ENCODE measurements at regions of chr11 and their contacts with region 1.

Region 1: DNA sequence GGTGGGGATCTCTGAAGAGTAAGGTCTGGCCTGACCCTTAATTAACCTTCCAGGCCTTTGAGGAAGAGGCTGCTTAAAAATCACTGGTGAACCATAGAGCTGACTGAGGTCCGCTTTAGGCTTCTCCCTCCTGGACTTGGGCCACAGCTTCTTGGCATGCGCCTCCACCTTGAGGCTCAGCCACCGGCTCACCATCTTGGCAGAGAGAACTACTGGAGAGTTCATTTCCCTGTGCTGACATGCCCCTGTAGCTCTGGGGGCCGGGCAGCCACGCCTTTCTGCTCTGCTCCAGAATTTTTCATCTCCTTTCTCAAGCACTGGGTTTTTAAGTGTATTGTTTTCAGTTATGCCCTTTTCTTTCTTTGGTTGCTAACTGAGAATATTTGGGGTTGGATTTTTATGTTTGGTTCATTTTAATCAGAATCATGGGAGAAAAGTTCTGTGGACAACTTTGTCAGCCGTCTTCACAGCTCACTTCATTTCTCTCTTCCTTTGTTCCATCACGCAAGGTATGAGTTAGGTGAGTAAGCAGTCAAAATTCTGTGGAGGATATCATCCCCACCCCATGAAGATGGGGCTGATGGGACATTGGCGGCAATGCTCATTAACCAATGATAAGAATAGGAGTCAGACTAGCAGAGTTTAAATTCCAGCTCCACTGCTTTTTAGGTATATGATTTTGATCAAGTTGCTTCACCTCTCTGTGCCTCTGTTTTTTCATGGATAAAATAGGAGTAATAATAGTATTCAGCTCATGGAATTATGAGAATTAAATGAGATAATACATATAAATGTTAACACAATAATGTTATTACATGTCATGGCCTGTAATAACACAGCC is 103.9 kb downstream of the DBX1 start:
- DNase-seq: no peak
- H3K4me3 ChIP-seq: no peak overlapping the region
- H3K27ac ChIP-seq: no peak overlapping the region
- H3K4me1 ChIP-seq: no peaks in the 10 kb centered on the region
- H3K27me3 ChIP-seq: no peaks in the 10 kb centered on the region
- CTCF ChIP-seq: no peak

Region 2: GRCh38 chr11:19915808-19916207 is 140.5 kb before region 1 on chr11:
- CTCF ChIA-PET with region 1: no interaction called
- POLR2A ChIA-PET with region 1: interaction called, 27 read pairs
- intact Hi-C with region 1: no loop called
- DNase-seq: no peak
- H3K4me3 ChIP-seq: no peak overlapping the region
- H3K27ac ChIP-seq: no peak overlapping the region
- H3K4me1 ChIP-seq: no peaks in the 10 kb centered on the region
- H3K27me3 ChIP-seq: no peaks in the 10 kb centered on the region
- CTCF ChIP-seq: no peak

Region 3: GRCh38 chr11:19929147-19929546 is 127.2 kb before region 1 on chr11:
- CTCF ChIA-PET with region 1: no interaction called
- POLR2A ChIA-PET with region 1: no interaction called
- intact Hi-C with region 1: no loop called
- DNase-seq: no peak
- H3K4me3 ChIP-seq: no peak overlapping the region
- H3K27ac ChIP-seq: no peak overlapping the region
- H3K4me1 ChIP-seq: no peaks in the 10 kb centered on the region
- H3K27me3 ChIP-seq: no peaks in the 10 kb centered on the region
- CTCF ChIP-seq: no peak

Region 4: DNA sequence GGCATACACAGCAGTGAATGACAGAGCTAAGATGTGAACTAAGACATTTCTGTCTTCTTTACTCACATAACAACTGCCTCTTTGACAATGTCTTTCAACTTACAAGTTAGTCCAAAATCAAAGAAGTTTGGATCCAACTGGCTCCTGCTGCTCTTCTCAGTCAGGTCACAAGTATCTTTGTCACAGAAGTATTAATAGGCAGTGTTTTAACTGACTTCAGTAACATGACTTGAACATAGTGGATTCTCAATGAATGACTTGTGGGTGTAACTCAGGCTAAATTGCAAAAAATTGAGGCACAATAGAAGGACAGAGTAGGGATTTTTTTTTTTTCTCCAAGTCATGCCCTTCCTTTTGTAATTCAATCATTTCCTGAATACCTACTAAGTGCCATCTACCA is 81.3 kb after region 1 on chr11:
- CTCF ChIA-PET with region 1: no interaction called
- POLR2A ChIA-PET with region 1: no interaction called
- intact Hi-C with region 1: no loop called
- DNase-seq: no peak
- H3K4me3 ChIP-seq: no peak overlapping the region
- H3K27ac ChIP-seq: no peak overlapping the region
- H3K4me1 ChIP-seq: no peaks in the 10 kb centered on the region
- H3K27me3 ChIP-seq: no peaks in the 10 kb centered on the region
- CTCF ChIP-seq: no peak

Region 5: GRCh38 chr11:20178991-20179390 is 122.7 kb after region 1 on chr11:
- CTCF ChIA-PET with region 1: no interaction called
- POLR2A ChIA-PET with region 1: no interaction called
- intact Hi-C with region 1: no loop called
- DNase-seq: no peak
- H3K4me3 ChIP-seq: no peak overlapping the region
- H3K27ac ChIP-seq: no peak overlapping the region
- H3K4me1 ChIP-seq: no peaks in the 10 kb centered on the region
- H3K27me3 ChIP-seq: no peaks in the 10 kb centered on the region
- CTCF ChIP-seq: no peak

Measured in A673 (cell line).